Activated T-helper 2 cell treated with anti-CD3 and anti-CD28 coated beads, Interferon-gamma antibody, Interleukin-2, Interleukin-4, amounts not matched to agents 10 μg/mL and 5 μg/mL and 100 μg/mL, durations not matched to agents 14 hours and 24 hours and 36 hours (primary cell): ENCODE measurements at regions of chr20 and their contacts with region 1.

Region 1: GRCh38 chr20:20052074-20052970 is at the starts of genes CFAP61 and CRNKL1:
- DNase-seq: peak; percentile 96
- H3K4me3 Mint-ChIP-seq: peak within 1 kb of the TSS; percentile 96
- H3K27ac Mint-ChIP-seq: peak within 1 kb of the TSS; percentile 90
- H3K4me1 Mint-ChIP-seq: peaks cover 9% of the 10 kb centered on the region
- H3K27me3 Mint-ChIP-seq: peaks cover 4% of the 10 kb centered on the region
- total RNA-seq, gene CFAP61: 0.32 TPM in 1 of 2 replicates, not detected in the other
- total RNA-seq, gene CRNKL1: 19.3 and 20.1 TPM in 2 replicates

Region 2: DNA sequence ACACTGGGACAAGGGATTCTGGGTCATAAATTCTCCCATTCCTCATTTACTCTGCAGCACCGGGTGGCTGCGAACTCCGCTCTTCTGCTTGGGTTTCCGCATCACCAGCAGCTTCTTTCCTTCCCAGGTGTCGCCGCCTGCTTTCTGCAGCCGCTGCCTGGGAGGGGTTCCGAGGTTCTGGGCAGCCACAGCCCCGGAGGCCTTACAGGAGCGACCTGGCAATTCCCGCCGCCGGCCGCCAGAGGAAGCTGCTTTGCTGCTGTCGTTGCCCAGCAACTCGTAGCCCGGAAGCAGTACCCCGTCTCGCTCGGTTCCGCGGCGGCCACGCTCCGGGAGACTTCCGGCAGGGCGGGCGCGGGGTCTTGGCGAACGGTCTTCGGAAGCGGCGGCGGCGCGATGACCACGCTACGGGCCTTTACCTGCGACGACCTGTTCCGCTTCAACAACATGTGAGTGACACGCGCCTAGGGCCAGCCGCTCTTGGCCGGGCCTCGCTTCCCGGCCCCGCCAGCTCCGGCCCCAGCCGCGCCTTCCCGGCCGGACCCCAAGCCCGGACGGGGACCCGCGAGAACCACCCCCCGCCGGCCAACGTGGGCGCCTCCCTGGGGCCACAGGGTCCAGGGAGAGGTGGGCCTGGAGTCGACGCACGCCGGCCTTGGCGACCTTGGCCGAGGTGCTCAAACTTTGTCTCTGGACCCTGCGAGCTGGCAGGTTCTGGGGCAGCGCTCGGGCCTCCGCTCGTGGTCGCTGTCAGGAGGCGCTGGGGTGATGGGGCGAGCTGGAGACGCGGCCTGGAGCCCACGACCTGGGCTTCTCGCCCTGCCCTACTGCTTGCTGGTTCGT is 35.1 kb before region 1 on chr20 and contains the start of gene NAA20:
- intact Hi-C with region 1: loop called (anchors 1 kb)
- DNase-seq: peak; percentile 85
- H3K4me3 Mint-ChIP-seq: peak within 1 kb of the TSS; percentile 89
- H3K27ac Mint-ChIP-seq: peak within 1 kb of the TSS; percentile 81
- H3K4me1 Mint-ChIP-seq: peaks cover 34% of the 10 kb centered on the region
- H3K27me3 Mint-ChIP-seq: no peaks in the 10 kb centered on the region
- total RNA-seq, gene NAA20: 72.9 and 76.0 TPM in 2 replicates

Region 3: GRCh38 chr20:20229595-20229994 is 177.3 kb after region 1 on chr20:
- intact Hi-C with region 1: no loop called
- DNase-seq: no peak
- H3K4me3 Mint-ChIP-seq: no peak overlapping the region
- H3K27ac Mint-ChIP-seq: no peak overlapping the region
- H3K4me1 Mint-ChIP-seq: no peaks in the 10 kb centered on the region
- H3K27me3 Mint-ChIP-seq: no peaks in the 10 kb centered on the region